Heart left ventricle (tissue), 16 donors: ENCODE measurements at regions of chr13 and their contacts with region 1.

Region 1: GRCh38 chr13:101942038-101942437 is 459.8 kb downstream of the FGF14 start:
- DNase-seq: peak in 2 of 5 donors; percentile 23 to 25
- ATAC-seq: peak in 3 of 4 donors; percentile 88 to 94 (median 88)
- H3K4me3 ChIP-seq: no peak overlapping the region
- H3K27ac ChIP-seq: no peak overlapping the region
- H3K4me1 ChIP-seq: peaks cover 0 to 7% (median 0%) of the 10 kb centered on the region in 12 donors
- H3K27me3 ChIP-seq: no peaks in the 10 kb centered on the region
- CTCF ChIP-seq: peak; percentile 54 to 85 (median 78)
- POLR2A ChIP-seq: no peak

Region 2: GRCh38 chr13:101881593-101881992 is 60.4 kb before region 1 on chr13:
- intact Hi-C with region 1: no loop called
- DNase-seq: no peak
- ATAC-seq: no peak
- H3K4me3 ChIP-seq: no peak overlapping the region
- H3K27ac ChIP-seq: no peak overlapping the region
- H3K4me1 ChIP-seq: no peaks in the 10 kb centered on the region
- H3K27me3 ChIP-seq: no peaks in the 10 kb centered on the region
- CTCF ChIP-seq: no peak
- POLR2A ChIP-seq: no peak

Region 3: DNA sequence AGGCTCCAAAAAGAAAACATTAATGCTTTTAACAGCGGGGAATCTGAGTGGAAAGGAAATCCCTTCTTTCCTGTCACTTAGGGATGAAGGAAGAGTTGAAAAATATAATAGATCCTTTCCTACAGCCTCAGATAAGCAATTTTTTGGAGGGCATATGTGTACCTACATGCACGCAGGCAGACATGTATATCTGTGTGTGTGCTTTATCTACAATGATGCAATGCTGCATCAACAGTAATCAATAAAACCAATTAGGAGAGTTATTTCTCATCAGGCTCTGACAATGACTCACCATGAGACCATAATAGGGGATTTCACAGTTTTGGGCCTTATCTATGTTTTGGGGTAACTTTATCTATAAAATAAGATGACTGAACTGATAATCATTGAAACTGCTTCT is 45.5 kb before region 1 on chr13:
- intact Hi-C with region 1: no loop called
- DNase-seq: no peak
- ATAC-seq: no peak
- H3K4me3 ChIP-seq: no peak overlapping the region
- H3K27ac ChIP-seq: no peak overlapping the region
- H3K4me1 ChIP-seq: no peaks in the 10 kb centered on the region
- H3K27me3 ChIP-seq: no peaks in the 10 kb centered on the region
- CTCF ChIP-seq: no peak
- POLR2A ChIP-seq: no peak

Region 4: DNA sequence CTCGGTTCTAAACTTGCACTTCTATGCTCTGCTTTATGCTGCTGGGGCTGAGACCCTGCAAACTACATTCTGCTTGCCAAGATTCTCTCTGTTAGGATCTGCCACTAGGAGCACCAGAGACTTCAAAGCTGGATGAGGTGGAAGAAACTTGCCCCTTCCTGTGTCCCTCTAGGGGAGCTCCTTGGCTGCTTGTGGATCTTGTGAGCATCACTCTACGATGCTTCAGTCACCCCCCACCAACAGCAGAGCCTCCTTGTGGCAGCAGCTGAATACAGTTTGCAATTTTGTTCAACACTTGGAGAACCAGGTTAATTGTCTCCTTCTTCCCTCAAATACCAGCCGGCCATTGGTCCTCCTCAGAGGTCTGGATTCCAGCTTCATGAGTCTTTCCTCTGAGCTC is 149.2 kb after region 1 on chr13:
- intact Hi-C with region 1: loop called in 3 of 10 experiments (anchors 5 to 10 kb)
- DNase-seq: no peak
- ATAC-seq: peak in 3 of 4 donors; percentile 10 to 29 (median 27)
- H3K4me3 ChIP-seq: no peak overlapping the region
- H3K27ac ChIP-seq: no peak overlapping the region
- H3K4me1 ChIP-seq: peaks cover 0 to 28% (median 0%) of the 10 kb centered on the region in 12 donors
- H3K27me3 ChIP-seq: no peaks in the 10 kb centered on the region
- CTCF ChIP-seq: peak in 4 of 12 donors; percentile 7 to 26 (median 14)
- POLR2A ChIP-seq: no peak

Region 5: DNA sequence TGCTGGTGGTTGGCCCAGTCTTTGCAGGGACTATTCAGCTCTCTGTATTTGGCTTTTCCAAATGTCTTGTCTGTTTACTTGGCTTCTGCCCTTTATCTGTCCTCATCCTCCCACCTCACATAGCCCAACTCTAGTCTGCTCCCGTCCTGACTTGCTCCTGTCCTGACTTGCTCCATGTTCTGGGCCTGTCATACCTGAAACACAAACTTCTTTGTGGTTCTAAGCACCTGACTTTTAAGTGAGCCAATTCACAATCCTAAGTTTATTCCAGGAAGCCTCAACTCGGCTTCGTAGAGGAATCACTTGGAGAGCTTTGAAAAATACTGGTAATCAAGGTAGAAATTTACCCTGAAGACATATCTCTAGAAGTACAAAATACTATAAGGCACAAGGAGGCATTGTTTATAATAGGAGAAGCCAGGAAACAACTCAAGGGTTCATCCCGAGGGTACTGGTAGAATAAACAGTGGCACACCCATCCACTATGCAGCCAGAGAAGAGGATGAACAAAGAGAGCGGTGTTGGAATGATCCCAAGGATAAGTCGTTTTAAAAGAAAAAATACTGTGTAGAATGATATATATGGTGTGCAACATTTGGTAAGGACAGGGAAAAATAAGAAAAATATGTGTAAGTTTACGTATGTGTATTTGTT is 175.3 kb after region 1 on chr13:
- intact Hi-C with region 1: no loop called
- DNase-seq: no peak
- ATAC-seq: no peak
- H3K4me3 ChIP-seq: no peak overlapping the region
- H3K27ac ChIP-seq: no peak overlapping the region
- H3K4me1 ChIP-seq: no peaks in the 10 kb centered on the region
- H3K27me3 ChIP-seq: no peaks in the 10 kb centered on the region
- CTCF ChIP-seq: no peak
- POLR2A ChIP-seq: no peak

Region 6: GRCh38 chr13:102141625-102142472 is 199.8 kb after region 1 on chr13:
- intact Hi-C with region 1: loop called in 4 of 10 experiments (anchors 5 to 10 kb)
- DNase-seq: no peak
- ATAC-seq: peak in 1 of 4 donors; percentile 57
- H3K4me3 ChIP-seq: peak overlapping the region in 1 of 12 donors; percentile 2
- H3K27ac ChIP-seq: peak overlapping the region in 1 of 12 donors; percentile 24
- H3K4me1 ChIP-seq: peaks cover 0 to 17% (median 0%) of the 10 kb centered on the region in 12 donors
- H3K27me3 ChIP-seq: no peaks in the 10 kb centered on the region
- CTCF ChIP-seq: peak; percentile 49 to 80 (median 64)
- POLR2A ChIP-seq: no peak

Region 7: DNA sequence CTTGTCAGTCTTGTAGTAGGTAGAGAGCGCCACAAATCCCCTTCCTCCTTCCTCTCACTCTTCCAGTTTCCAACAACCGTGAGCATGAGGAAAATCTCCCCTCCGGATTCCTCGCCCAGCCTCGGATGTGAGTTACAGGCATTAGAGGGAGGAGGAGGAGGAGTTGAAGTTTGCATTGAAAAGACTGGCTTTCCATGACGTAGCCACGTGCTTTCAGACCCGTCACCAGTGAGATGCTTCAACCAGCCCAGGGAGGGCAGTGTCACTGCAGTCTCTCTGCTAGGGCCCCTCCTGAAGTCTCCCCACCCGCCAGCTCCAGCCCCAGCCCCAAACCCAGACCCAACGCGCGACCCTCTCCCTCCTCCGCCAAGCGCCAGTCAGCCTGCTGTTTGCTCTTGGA is 460.3 kb after region 1 on chr13:
- intact Hi-C with region 1: loop called in 3 of 10 experiments (anchors 5 to 10 kb)
- DNase-seq: peak; percentile 29 to 53 (median 37)
- ATAC-seq: peak; percentile 49 to 75 (median 72)
- H3K4me3 ChIP-seq: peak overlapping the region in 11 of 12 donors; percentile 28 to 73 (median 63)
- H3K27ac ChIP-seq: peak overlapping the region in 2 of 12 donors; percentile 48 to 51
- H3K4me1 ChIP-seq: peaks cover 0 to 30% (median 0%) of the 10 kb centered on the region in 12 donors
- H3K27me3 ChIP-seq: peaks cover 0 to 47% (median 11%) of the 10 kb centered on the region in 9 donors
- CTCF ChIP-seq: peak in 4 of 12 donors; percentile 8 to 37 (median 16)
- POLR2A ChIP-seq: no peak

Region 8: DNA sequence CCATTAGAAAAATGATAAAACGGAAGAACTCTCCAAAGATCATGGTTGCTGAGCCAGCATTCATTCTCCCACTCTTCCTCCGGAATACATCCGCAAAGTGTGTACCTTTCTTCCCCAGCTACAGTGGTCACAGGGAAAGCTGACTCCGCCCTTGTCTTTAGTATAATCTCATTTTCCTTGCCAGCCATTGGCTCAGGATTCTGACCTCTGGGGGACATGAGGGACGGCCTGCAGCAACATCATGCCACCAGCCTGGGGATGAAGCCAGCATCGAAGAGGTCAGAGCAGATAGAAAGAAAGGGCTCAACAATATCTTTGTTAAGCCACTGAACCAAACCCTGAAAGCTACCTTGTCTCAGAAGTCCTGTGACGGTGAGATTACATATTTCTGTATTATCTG is 608.5 kb after region 1 on chr13:
- intact Hi-C with region 1: loop called in 8 of 10 experiments (anchors 2 to 10 kb)
- DNase-seq: no peak
- ATAC-seq: no peak
- H3K4me3 ChIP-seq: no peak overlapping the region
- H3K27ac ChIP-seq: no peak overlapping the region
- H3K4me1 ChIP-seq: no peaks in the 10 kb centered on the region
- H3K27me3 ChIP-seq: no peaks in the 10 kb centered on the region
- CTCF ChIP-seq: no peak
- POLR2A ChIP-seq: no peak